ENCODE measurements at regions of chr4 and their contacts with region 1.

Region 1: GRCh38 chr4:74133786-74134499 is 24.0 kb upstream of the MTHFD2L start:
- DNase-seq: peak; percentile 67 to 76 (median 73)
- ATAC-seq: peak; percentile 71 to 93 (median 92)
- H3K4me3 ChIP-seq: no peak overlapping the region
- H3K27ac ChIP-seq: no peak overlapping the region
- H3K4me1 ChIP-seq: peaks cover 0 to 4% (median 0%) of the 10 kb centered on the region in 12 donors
- H3K27me3 ChIP-seq: no peaks in the 10 kb centered on the region
- CTCF ChIP-seq: peak; percentile 73 to 93 (median 86)
- POLR2A ChIP-seq: no peak

Region 2: DNA sequence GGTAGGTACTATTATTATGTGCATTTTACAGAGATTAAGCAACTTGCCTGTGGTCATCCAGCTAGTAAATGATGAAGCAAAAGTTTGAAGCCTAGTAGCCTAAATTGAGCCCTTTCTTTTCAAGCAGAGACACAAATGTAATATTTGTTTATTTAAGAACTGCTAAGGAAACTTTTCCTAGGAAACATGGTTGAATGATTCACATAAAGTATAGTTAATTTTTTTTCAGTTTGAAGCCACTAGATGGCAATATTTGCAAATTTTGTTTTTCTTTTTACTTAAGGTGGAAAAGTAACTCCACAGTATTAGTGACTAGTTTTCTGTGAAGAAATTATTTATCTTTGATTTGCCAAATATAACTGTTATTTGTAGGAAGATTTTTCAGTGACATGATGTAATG is 822.5 kb before region 1 on chr4:
- intact Hi-C with region 1: loop called in 2 of 10 experiments (anchors 5 to 10 kb)
- DNase-seq: no peak
- ATAC-seq: no peak
- H3K4me3 ChIP-seq: no peak overlapping the region
- H3K27ac ChIP-seq: no peak overlapping the region
- H3K4me1 ChIP-seq: no peaks in the 10 kb centered on the region
- H3K27me3 ChIP-seq: no peaks in the 10 kb centered on the region
- CTCF ChIP-seq: peak in 11 of 12 donors; percentile 14 to 55 (median 36)
- POLR2A ChIP-seq: no peak

Region 3: DNA sequence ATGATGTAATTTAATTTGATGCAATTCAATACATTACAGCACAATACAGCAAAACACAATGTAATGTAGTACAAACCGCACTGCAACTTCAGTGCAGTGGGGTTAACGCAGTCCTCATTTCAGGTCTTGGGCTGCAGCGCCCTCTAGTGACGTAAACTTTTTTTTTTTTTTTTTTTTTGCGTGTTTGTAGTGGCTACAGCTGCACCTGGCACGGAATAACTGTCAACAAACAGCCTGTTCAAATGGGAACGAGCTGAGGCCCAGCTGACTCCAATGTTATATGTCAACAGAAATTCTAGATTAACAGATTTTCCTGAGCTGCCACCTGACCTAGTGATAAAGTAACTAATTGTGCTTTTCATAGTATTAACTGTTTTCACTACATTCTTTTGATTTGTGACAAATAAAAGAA is 480.2 kb before region 1 on chr4:
- intact Hi-C with region 1: loop called in 1 of 10 experiments (anchors 5 kb)
- DNase-seq: no peak
- ATAC-seq: peak in 3 of 4 donors; percentile 24 to 50 (median 46)
- H3K4me3 ChIP-seq: no peak overlapping the region
- H3K27ac ChIP-seq: no peak overlapping the region
- H3K4me1 ChIP-seq: peaks cover 0 to 5% (median 0%) of the 10 kb centered on the region in 12 donors
- H3K27me3 ChIP-seq: peaks cover 0 to 12% (median 0%) of the 10 kb centered on the region in 9 donors
- CTCF ChIP-seq: peak; percentile 43 to 76 (median 66)
- POLR2A ChIP-seq: no peak

Region 4: DNA sequence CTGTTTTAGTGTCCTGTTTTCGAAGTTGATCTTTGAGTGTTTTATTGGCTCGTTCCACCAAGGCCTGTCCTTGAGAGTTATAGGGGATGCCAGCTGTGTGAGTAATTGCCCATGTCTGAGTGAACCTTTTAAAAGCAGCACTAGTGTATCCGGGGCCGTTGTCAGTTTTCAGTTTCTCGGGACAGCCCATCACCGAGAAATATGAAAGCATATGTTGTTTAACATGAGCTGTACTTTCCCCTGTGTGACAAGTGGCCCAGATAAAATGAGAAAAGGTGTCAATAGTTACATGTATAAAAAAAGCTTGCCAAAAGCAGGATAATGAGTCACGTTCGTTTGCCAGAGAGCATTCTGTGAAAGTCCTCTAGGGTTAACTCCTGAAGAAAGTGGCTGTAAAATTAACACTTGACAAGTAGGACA is 465.2 kb before region 1 on chr4:
- intact Hi-C with region 1: loop called in 5 of 10 experiments (anchors 2 to 5 kb)
- DNase-seq: no peak
- ATAC-seq: no peak
- H3K4me3 ChIP-seq: no peak overlapping the region
- H3K27ac ChIP-seq: no peak overlapping the region
- H3K4me1 ChIP-seq: peaks cover 0 to 4% (median 0%) of the 10 kb centered on the region in 12 donors
- H3K27me3 ChIP-seq: no peaks in the 10 kb centered on the region
- CTCF ChIP-seq: no peak
- POLR2A ChIP-seq: no peak

Region 5: DNA sequence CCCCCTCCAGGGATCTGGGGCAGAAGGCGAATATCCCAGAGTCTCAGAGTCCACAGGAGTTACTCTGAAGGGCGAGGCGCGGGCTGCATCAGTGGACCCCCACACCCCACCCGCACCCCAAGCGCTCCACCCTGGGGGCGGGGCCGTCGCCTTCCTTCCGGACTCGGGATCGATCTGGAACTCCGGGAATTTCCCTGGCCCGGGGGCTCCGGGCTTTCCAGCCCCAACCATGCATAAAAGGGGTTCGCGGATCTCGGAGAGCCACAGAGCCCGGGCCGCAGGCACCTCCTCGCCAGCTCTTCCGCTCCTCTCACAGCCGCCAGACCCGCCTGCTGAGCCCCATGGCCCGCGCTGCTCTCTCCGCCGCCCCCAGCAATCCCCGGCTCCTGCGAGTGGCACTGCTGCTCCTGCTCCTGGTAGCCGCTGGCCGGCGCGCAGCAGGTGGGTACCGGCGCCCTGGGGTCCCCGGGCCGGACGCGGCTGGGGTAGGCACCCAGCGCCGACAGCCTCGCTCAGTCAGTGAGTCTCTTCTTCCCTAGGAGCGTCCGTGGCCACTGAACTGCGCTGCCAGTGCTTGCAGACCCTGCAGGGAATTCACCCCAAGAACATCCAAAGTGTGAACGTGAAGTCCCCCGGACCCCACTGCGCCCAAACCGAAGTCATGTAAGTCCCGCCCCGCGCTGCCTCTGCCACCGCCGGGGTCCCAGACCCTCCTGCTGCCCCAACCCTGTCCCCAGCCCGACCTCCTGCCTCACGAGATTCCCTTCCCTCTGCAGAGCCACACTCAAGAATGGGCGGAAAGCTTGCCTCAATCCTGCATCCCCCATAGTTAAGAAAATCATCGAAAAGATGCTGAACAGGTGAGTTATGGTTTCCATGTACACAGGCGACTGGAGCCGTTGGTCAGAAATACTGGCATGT is 264.6 kb before region 1 on chr4 and contains the start of gene CXCL1:
- intact Hi-C with region 1: loop called in 2 of 10 experiments (anchors 5 to 10 kb)
- DNase-seq: peak; percentile 23 to 71 (median 59)
- ATAC-seq: peak; percentile 45 to 80 (median 74)
- H3K4me3 ChIP-seq: peak within 1 kb of the TSS; percentile 51 to 80 (median 64)
- H3K27ac ChIP-seq: peak within 1 kb of the TSS in 11 of 12 donors; percentile 32 to 75 (median 59)
- H3K4me1 ChIP-seq: peaks cover 0 to 23% (median 5%) of the 10 kb centered on the region in 12 donors
- H3K27me3 ChIP-seq: peaks cover 0 to 21% (median 0%) of the 10 kb centered on the region in 9 donors
- CTCF ChIP-seq: peak in 1 of 12 donors; percentile 11
- POLR2A ChIP-seq: no peak
- total RNA-seq, gene CXCL1: 0.26 to 14.9 (median 1.5) TPM in 8 of 9 donors, not detected in the other

Region 6: GRCh38 chr4:74023709-74024108 is 110.2 kb before region 1 on chr4:
- intact Hi-C with region 1: loop called in 1 of 10 experiments (anchors 10 kb)
- DNase-seq: no peak
- ATAC-seq: no peak
- H3K4me3 ChIP-seq: no peak overlapping the region
- H3K27ac ChIP-seq: no peak overlapping the region
- H3K4me1 ChIP-seq: no peaks in the 10 kb centered on the region
- H3K27me3 ChIP-seq: no peaks in the 10 kb centered on the region
- CTCF ChIP-seq: no peak
- POLR2A ChIP-seq: no peak

Region 7: GRCh38 chr4:74098450-74098994 is 35.4 kb before region 1 on chr4:
- intact Hi-C with region 1: loop called in 2 of 10 experiments (anchors 5 kb)
- DNase-seq: peak in 3 of 5 donors; percentile 26 to 52 (median 38)
- ATAC-seq: peak in 1 of 4 donors; percentile 21
- H3K4me3 ChIP-seq: peak overlapping the region; percentile 38 to 78 (median 65)
- H3K27ac ChIP-seq: peak overlapping the region; percentile 70 to 91 (median 85)
- H3K4me1 ChIP-seq: peaks cover 0 to 19% (median 2%) of the 10 kb centered on the region in 12 donors
- H3K27me3 ChIP-seq: peaks cover 0 to 5% (median 0%) of the 10 kb centered on the region in 9 donors
- CTCF ChIP-seq: no peak
- POLR2A ChIP-seq: no peak

Measured in heart left ventricle (tissue), 16 donors.